ENCODE measurements at regions of chr1 and their contacts with region 1.

Region 1: GRCh38 chr1:9629445-9630201 is 21.9 kb upstream of the PIK3CD start:
- DNase-seq: peak; percentile 53 to 62
- ATAC-seq: peak; percentile 29 to 72 (median 54)
- H3K4me3 ChIP-seq: peak overlapping the region in 2 of 10 donors; percentile 11 to 47
- H3K27ac ChIP-seq: peak overlapping the region in 1 of 10 donors; percentile 89
- H3K4me1 ChIP-seq: peaks cover 0 to 64% (median 4%) of the 10 kb centered on the region in 9 donors
- H3K27me3 ChIP-seq: peaks cover 0 to 18% (median 17%) of the 10 kb centered on the region in 7 donors
- CTCF ChIP-seq: no peak

Region 2: GRCh38 chr1:9494929-9495758 is 134.5 kb before region 1 on chr1:
- intact Hi-C with region 1: no loop called
- DNase-seq: peak; percentile 19 to 63
- ATAC-seq: peak; percentile 67 to 81 (median 72)
- H3K4me3 ChIP-seq: peak overlapping the region in 7 of 10 donors; percentile 31 to 52 (median 43)
- H3K27ac ChIP-seq: no peak overlapping the region
- H3K4me1 ChIP-seq: peaks cover 0 to 15% (median 8%) of the 10 kb centered on the region in 9 donors
- H3K27me3 ChIP-seq: peaks cover 0 to 12% (median 0%) of the 10 kb centered on the region in 7 donors
- CTCF ChIP-seq: peak; percentile 95 to 99 (median 98)

Region 3: DNA sequence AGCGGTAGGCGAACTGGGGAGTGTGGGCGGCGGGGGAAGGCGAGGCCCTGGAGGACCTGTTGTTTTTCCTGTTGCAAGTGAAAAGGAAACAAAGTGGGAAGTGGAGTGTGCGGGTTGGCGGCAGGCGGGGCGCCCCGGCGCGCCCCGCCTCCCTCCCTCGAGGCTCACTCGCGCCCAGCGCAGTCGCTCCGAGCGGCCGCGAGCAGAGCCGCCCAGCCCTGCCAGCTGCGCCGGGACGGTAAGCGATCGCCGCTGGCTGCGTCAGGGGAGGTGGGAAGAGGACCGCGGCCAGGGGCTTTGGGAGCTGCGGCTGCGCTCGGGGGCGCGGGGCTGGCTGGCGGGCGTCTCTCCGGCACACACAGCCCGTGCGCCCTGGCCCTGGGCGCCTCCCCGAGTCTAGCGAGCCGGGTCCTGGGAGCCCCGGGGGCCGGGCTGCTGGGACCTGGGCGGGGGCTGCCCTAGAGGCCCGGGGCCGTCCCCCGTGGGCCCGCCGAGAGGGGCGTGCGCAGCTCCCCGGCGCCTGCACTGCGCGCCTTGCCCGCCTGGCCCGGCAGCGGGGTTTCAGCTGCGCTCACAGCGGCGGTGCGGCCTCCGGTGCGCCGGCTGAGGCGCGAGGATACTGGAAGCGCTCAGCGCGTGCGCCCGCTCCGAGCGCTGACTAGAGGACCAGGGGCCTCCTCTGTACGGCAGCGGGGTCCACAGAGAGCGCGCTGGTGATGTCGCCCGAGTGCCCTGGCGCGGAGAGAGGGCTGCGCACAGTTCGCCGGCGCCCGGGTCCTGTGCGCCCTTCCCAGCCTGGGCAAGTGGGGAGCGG is 22.1 kb after region 1 on chr1 and contains the start of gene PIK3CD:
- intact Hi-C with region 1: no loop called
- DNase-seq: peak in 1 of 2 donors; percentile 32
- ATAC-seq: peak in 7 of 8 donors; percentile 27 to 69 (median 50)
- H3K4me3 ChIP-seq: peak within 1 kb of the TSS; percentile 7 to 86 (median 56)
- H3K27ac ChIP-seq: peak within 1 kb of the TSS in 6 of 10 donors; percentile 39 to 96 (median 46)
- H3K4me1 ChIP-seq: peaks cover 2 to 49% (median 17%) of the 10 kb centered on the region in 9 donors
- H3K27me3 ChIP-seq: peaks cover 0 to 51% (median 43%) of the 10 kb centered on the region in 7 donors
- CTCF ChIP-seq: no peak
- total RNA-seq, gene PIK3CD: 1.9 to 12.1 (median 3.0) TPM

Region 4: DNA sequence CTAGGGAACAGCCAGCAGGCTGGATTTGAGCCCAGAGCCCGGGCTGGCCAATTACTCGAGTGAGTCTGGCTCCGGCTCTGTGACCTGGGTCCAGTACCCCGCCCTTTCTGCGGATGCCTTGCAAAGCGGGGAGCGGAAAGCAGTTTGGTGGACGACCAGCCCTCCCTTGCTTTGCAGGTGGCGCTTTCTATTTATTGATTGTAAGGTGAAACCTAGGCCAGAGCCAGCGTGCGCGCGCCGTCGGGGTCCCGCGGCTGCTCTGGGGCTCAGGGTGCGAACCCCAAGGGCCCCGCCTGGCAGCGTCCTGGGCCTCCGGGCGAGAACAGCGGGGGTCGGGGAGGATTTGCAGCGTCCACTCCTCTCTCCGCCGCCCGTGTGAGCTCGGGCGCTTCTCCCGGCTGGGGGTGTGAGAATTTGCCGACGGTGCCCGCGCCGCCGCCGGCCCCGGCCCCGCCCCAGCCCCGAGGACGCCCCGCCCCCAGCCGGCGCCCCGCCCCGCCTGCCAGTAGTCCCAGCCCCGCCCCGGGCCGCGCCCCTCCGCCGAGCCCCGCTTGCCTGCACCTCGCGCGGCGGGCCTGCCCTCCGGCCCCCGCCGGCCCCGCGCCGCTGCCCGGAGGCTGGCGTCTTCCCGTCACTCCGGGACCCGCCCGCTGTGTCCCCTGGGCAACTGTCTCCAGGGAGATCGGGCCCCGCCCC is 59.5 kb after region 1 on chr1:
- intact Hi-C with region 1: loop called in 2 of 10 experiments (anchors 10 kb)
- DNase-seq: peak; percentile 78 to 87
- ATAC-seq: peak; percentile 79 to 95 (median 88)
- H3K4me3 ChIP-seq: peak overlapping the region; percentile 47 to 82 (median 68)
- H3K27ac ChIP-seq: peak overlapping the region in 4 of 10 donors; percentile 11 to 64 (median 52)
- H3K4me1 ChIP-seq: peaks cover 5 to 73% (median 35%) of the 10 kb centered on the region in 9 donors
- H3K27me3 ChIP-seq: no peaks in the 10 kb centered on the region
- CTCF ChIP-seq: no peak

Region 5: DNA sequence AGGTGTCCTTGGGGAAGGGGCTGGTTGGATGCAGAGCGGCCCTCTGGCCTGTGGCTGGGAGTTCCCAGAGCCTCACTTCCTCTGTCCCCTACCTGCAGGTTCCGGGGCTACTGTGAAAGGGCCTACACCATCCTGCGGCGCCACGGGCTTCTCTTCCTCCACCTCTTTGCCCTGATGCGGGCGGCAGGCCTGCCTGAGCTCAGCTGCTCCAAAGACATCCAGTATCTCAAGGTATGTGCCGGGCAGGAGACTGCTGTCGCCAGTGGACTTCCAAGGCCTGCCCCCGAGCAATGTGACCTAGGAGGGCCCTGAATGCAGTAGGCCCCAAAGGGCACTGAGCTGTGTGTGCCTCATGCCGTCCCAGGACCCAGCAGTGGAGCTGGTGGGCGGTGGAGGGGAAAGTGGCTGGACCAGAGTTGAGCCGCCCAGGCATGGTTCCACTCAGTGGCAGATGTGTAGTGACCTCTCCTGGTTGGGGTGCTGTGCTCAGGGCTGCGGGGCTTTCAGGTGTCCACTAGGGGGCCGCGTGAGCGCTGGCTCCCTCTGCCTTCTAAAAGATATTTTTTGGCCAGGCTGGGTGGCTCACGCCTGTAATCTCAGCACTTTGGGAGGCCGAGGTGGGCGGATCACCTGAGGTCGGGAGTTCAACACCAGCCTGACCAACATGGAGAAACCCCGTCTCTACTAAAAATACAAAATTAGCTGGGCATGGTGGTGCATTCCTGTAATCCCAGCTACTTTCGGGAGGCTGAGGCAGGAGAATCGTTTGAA is 95.3 kb after region 1 on chr1:
- intact Hi-C with region 1: loop called in 2 of 10 experiments (anchors 5 kb)
- DNase-seq: peak in 1 of 2 donors; percentile 59
- ATAC-seq: peak in 7 of 8 donors; percentile 41 to 68 (median 51)
- H3K4me3 ChIP-seq: no peak overlapping the region
- H3K27ac ChIP-seq: no peak overlapping the region
- H3K4me1 ChIP-seq: no peaks in the 10 kb centered on the region
- H3K27me3 ChIP-seq: no peaks in the 10 kb centered on the region
- CTCF ChIP-seq: peak; percentile 32 to 91 (median 71)

Region 6: GRCh38 chr1:9780554-9781110 is 151.0 kb after region 1 on chr1:
- intact Hi-C with region 1: no loop called
- DNase-seq: no peak
- ATAC-seq: no peak
- H3K4me3 ChIP-seq: no peak overlapping the region
- H3K27ac ChIP-seq: no peak overlapping the region
- H3K4me1 ChIP-seq: peaks cover 0 to 7% (median 0%) of the 10 kb centered on the region in 9 donors
- H3K27me3 ChIP-seq: no peaks in the 10 kb centered on the region
- CTCF ChIP-seq: no peak

Region 7: DNA sequence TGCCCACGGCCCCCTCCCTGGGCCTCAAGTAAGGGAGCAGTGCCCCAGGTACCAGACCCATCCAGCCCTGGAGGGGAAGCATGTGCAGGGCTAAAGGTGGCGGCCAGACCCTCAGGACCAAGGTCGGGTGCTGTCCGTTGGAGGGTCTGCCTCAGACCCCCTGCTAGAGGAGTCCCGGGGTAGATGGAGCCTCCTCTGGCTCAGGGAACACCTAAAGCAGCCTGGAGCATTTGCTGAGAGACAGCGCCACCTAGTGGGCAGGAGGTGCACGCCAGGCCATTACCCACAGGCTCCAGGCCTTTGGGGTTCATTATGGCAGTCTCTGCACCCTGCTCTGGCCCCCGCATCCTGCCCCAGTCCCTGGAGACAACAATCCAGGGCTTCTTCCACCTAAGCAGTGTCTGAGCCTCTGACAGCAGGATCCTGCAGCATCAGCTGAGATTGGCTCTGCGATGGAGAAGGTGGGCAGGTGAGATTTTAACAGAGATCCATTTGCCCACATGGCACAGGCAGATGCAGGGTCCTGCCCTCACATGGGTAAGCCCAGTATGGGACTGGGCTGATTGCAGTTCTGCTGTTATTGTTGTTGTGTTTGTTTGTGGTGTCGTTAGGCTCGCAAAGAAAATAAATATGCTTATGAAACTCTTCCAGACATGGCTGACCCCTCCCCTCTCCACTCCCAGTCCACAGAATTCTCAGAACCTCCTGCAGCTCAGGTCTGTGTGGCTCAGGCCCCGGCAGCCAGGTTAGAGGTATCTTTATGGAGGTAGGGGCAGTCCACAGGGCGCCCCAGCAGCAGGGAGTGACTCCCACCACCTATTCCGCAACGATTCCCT is 238.0 kb after region 1 on chr1:
- intact Hi-C with region 1: loop called in 9 of 10 experiments (anchors 1 to 10 kb)
- DNase-seq: peak; percentile 70 to 79
- ATAC-seq: peak; percentile 81 to 92 (median 84)
- H3K4me3 ChIP-seq: no peak overlapping the region
- H3K27ac ChIP-seq: no peak overlapping the region
- H3K4me1 ChIP-seq: peaks cover 0 to 25% (median 14%) of the 10 kb centered on the region in 9 donors
- H3K27me3 ChIP-seq: no peaks in the 10 kb centered on the region
- CTCF ChIP-seq: peak; percentile 94 to 99 (median 98)

Region 8: DNA sequence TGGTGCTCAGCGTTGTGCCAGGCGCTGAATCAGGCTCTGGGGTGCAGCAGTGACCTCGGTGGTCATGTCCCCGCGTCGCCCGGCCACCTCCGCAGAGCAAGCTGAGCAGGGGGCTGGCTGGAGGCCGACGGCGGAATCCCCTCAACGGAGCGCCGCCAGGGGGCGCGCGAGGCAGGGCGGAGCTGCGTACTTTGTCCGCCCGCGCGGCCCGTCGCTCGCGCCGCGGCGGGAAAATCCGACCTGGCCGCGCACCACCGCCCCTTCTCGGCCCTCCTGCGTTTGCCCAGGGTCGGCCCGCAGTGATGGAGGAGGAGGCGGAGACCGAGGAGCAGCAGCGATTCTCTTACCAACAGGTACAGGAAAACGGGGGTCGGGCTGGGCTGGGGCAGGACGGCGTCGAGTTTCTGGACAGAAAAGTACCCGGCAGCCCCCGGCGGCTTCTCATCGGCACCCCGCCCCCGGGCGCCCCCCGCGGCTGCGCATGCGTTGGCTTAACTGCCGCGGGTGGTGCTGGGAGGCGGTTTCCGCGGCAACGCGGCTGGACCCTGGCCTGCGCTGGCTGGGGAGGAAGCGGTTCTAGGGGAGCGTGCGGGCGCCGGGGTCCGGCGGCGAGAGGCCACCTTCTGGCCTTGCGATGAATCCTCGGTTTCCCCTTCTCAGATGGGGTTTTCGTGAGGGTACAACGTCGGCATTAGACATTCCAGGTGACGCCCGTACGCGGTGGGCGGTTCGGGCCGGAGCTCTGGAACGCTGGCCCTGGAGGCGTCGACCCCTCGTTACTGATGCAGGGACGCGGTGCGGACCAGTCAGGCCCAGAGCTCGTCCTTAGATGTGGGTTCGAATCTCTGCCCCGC is 800.8 kb after region 1 on chr1 and contains the start of gene CENPS:
- intact Hi-C with region 1: loop called in 2 of 10 experiments (anchors 5 kb)
- DNase-seq: peak; percentile 90 to 92
- ATAC-seq: peak; percentile 96 to 98 (median 98)
- H3K4me3 ChIP-seq: peak within 1 kb of the TSS; percentile 52 to 93 (median 75)
- H3K27ac ChIP-seq: peak within 1 kb of the TSS in 9 of 10 donors; percentile 43 to 81 (median 67)
- H3K4me1 ChIP-seq: peaks cover 0 to 19% (median 13%) of the 10 kb centered on the region in 9 donors
- H3K27me3 ChIP-seq: no peaks in the 10 kb centered on the region
- CTCF ChIP-seq: peak; percentile 92 to 98 (median 96)
- total RNA-seq, gene CENPS: 4.9 to 10.7 (median 9.4) TPM